Ascending aorta (tissue), 2 donors: ENCODE measurements at regions of chr22 and their contacts with region 1.

Region 1: DNA sequence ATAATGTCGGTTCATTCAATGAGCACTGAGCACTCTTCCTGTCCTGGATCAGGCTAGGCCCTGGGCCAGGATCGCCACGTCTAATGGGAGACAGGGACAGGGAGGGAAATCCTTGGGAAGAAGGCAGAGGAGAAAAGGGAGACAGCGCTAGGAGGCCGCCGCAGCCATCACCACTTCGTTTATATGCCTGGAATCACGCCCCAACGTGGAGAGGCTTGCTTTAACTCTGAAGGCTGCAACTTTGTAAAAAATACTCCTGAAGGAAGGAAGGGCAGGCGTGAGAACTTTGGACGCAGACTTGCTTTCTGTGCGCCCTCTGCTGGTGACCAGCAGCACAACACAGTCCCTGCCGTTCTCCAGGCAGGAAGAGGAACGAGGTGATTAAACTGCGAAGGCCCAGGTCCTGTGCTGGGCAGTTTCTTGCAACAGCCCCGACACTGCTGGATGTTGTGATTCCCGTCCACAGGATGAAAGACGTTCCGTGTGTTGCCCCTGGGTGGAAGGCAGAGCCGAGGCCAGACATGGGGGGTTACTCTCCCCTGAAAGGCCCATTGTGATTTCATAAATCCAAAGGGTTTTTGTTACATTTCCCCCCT is 22.1 kb downstream of the RIBC2 start:
- DNase-seq: peak; percentile 50 to 94
- H3K4me3 ChIP-seq: peak overlapping the region in 1 of 2 donors; percentile 42
- H3K27ac ChIP-seq: peak overlapping the region; percentile 63 to 75
- H3K4me1 ChIP-seq: peaks cover 0 to 4% of the 10 kb centered on the region in 2 donors
- H3K27me3 ChIP-seq: no peaks in the 10 kb centered on the region
- CTCF ChIP-seq: peak; percentile 92 to 97 (median 96)

Region 2: DNA sequence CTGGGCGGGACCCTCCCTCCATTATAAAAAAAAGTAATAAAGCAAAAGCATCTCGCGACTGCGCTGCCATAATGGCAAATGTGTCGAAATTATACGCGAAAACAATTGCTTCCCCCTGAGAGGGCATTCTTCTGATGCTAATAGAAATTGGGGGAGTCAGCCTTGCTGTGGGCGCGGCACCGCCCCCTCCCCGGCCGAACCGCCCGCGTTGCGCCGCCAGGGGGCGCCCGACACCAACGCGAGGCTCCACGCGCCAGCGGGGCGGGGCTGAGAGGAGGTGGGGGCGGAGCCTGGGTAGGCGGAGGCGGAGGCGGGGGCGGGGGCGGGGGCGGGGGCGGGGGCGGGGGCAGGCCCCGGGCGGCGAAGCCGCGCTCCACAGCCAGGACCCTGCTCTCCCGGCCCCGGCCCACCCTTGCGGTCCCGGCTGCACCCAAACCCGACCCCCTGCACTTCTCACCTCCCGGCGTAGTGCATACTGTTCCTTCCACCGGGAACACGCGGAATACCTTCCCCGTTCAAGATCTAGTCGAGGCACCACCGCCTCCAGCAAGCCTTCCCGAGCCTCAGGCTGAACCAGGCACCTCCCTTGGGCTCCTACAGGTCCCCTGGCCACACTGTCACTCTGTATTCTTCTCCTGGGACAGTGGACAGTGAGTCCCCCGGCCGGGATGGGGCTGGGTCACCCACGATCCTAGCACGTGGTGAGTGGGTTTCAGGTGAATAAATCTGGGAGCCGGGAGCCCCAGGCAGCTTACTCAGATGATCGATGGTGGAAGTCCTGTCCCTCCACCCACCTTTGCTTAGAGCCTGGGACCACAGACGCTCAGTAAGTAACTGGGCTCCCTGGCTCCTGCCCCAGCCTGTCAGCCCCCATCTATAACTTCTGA is 166.4 kb before region 1 on chr22:
- intact Hi-C with region 1: loop called (anchors 1 kb)
- DNase-seq: peak in 1 of 2 donors; percentile 91
- H3K4me3 ChIP-seq: peak overlapping the region; percentile 70 to 72
- H3K27ac ChIP-seq: peak overlapping the region in 1 of 2 donors; percentile 17
- H3K4me1 ChIP-seq: peaks cover 8 to 27% of the 10 kb centered on the region in 2 donors
- H3K27me3 ChIP-seq: no peaks in the 10 kb centered on the region
- CTCF ChIP-seq: peak; percentile 74 to 97 (median 83)

Region 3: GRCh38 chr22:45534339-45535192 is 98.9 kb after region 1 on chr22:
- intact Hi-C with region 1: no loop called
- DNase-seq: no peak
- H3K4me3 ChIP-seq: no peak overlapping the region
- H3K27ac ChIP-seq: peak overlapping the region; percentile 39 to 79
- H3K4me1 ChIP-seq: peaks cover 9 to 34% of the 10 kb centered on the region in 2 donors
- H3K27me3 ChIP-seq: no peaks in the 10 kb centered on the region
- CTCF ChIP-seq: no peak